ENCODE measurements at regions of chr10 and their contacts with region 1.

Region 1: DNA sequence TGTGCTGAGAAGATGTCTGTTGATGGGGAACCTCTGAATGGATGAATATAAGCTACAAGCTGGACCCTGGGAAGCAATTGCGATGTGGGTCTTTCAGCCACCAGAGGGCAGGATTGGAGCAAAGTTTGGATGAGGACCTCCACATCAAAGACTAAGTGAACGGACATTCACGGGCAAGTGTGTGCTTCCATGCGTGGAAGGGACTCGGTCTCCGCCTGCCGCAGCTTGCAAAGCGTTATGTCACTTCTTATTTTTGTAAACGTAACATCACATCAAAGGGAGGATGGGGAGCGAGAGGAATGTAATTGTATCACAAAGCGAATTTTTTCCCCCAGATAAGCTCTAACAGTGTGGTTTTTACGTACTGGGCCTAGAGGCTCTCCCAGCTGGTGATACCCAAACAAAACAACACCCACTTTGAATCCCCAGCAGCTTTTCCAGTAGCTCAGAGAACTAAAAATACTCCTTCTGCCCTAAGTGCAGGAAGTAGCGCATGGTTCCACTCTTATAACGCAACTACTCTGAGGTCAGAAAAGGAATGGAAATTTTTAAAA is 65.0 kb downstream of the VWA2 start:
- DNase-seq: peak; percentile 67
- ATAC-seq: peak; percentile 92
- H3K4me3 ChIP-seq: peak overlapping the region; percentile 78
- H3K27ac ChIP-seq: no peak overlapping the region
- H3K4me1 ChIP-seq: peaks cover 8% of the 10 kb centered on the region
- H3K27me3 ChIP-seq: no peaks in the 10 kb centered on the region
- CTCF ChIP-seq: peak; percentile 77 to 91 (median 87); a peak in 5 of 6 replicates
- EP300 ChIP-seq: no peak
- POLR2A ChIP-seq: no peak
- RAD21 ChIP-seq: peak; percentile 90

Region 2: DNA sequence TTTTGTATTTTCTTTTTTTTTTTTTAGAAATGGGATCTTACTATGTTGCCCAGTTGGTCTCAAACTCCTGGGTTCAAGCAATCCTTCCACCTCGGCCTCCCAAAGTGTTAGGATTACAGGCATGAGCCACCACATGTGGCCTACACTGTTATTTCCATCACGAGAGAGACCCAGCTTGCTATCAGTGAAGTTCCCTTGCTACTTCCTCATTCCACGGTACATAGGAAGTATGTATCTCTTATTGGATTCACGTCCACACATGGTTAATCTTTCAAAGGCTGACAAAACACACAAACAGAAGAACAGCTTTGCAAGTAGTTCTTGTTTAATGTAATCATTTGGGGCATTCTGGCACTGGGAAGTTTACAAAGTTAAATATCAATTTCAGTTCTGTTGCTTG is 501.1 kb before region 1 on chr10:
- CTCF ChIA-PET with region 1: interaction called, 3 read pairs
- POLR2A ChIA-PET with region 1: no interaction called
- RAD21 ChIA-PET with region 1: interaction called, 3 read pairs
- SMC1A ChIA-PET with region 1: no interaction called
- in situ Hi-C with region 1: no loop called
- intact Hi-C with region 1: loop called (anchors 5 kb)
- DNase-seq: no peak
- ATAC-seq: peak; percentile 55; the same call in 2 of the 3 replicates
- H3K4me3 ChIP-seq: no peak overlapping the region
- H3K27ac ChIP-seq: no peak overlapping the region
- H3K4me1 ChIP-seq: peaks cover under 1% of the 10 kb centered on the region
- H3K27me3 ChIP-seq: no peaks in the 10 kb centered on the region; a peak in 1 of 4 replicates
- CTCF ChIP-seq: no peak
- EP300 ChIP-seq: no peak
- POLR2A ChIP-seq: no peak
- RAD21 ChIP-seq: no peak

Region 3: GRCh38 chr10:114327537-114328440 is 23.7 kb after region 1 on chr10:
- CTCF ChIA-PET with region 1: interaction called, 16 read pairs
- POLR2A ChIA-PET with region 1: no interaction called
- RAD21 ChIA-PET with region 1: interaction called, 5 read pairs
- SMC1A ChIA-PET with region 1: interaction called, 4 read pairs
- in situ Hi-C with region 1: no loop called
- intact Hi-C with region 1: no loop called
- DNase-seq: no peak
- ATAC-seq: no peak
- H3K4me3 ChIP-seq: no peak overlapping the region
- H3K27ac ChIP-seq: no peak overlapping the region
- H3K4me1 ChIP-seq: no peaks in the 10 kb centered on the region
- H3K27me3 ChIP-seq: peaks cover 0 to 2% of the 10 kb centered on the region in 2 experiments; a peak in 2 of 4 replicates
- CTCF ChIP-seq: no peak
- EP300 ChIP-seq: no peak
- POLR2A ChIP-seq: no peak
- RAD21 ChIP-seq: no peak

Region 4: DNA sequence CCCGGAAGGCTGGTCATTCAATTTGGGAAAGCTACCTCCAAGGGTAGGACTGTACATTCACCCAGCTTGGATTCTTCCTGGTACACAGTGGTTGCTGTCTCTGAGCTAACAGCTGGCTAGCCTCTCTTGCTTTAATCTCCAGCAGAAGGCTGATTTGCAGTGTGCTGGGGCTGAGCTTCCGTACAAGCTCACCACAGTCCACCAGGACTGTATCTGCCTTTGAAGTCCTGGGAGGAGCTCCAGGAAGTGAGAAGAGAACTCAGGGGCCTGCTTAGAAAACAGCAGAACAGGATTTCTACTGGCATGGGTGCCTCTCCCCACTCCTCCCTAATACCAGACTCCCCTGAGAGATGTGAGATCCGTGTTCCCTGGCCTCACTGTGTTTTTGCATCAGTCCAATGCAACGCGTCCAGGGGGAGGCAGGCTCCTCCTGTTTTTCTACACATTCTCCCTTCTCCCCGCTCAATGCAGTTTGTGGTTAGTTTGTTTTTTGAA is 93.6 kb after region 1 on chr10:
- CTCF ChIA-PET with region 1: interaction called, 25 read pairs
- POLR2A ChIA-PET with region 1: interaction called, 3 read pairs
- RAD21 ChIA-PET with region 1: interaction called, 21 read pairs
- SMC1A ChIA-PET with region 1: interaction called, 14 read pairs
- in situ Hi-C with region 1: no loop called
- intact Hi-C with region 1: no loop called
- DNase-seq: no peak
- ATAC-seq: peak; percentile 70
- H3K4me3 ChIP-seq: no peak overlapping the region
- H3K27ac ChIP-seq: peak overlapping the region; percentile 41
- H3K4me1 ChIP-seq: peaks cover 18% of the 10 kb centered on the region
- H3K27me3 ChIP-seq: peaks cover 0 to under 1% of the 10 kb centered on the region in 2 experiments; a peak in 1 of 4 replicates
- CTCF ChIP-seq: peak in 1 of 3 experiments; percentile 2; a peak in 1 of 6 replicates
- EP300 ChIP-seq: no peak
- POLR2A ChIP-seq: no peak
- RAD21 ChIP-seq: no peak

Region 5: DNA sequence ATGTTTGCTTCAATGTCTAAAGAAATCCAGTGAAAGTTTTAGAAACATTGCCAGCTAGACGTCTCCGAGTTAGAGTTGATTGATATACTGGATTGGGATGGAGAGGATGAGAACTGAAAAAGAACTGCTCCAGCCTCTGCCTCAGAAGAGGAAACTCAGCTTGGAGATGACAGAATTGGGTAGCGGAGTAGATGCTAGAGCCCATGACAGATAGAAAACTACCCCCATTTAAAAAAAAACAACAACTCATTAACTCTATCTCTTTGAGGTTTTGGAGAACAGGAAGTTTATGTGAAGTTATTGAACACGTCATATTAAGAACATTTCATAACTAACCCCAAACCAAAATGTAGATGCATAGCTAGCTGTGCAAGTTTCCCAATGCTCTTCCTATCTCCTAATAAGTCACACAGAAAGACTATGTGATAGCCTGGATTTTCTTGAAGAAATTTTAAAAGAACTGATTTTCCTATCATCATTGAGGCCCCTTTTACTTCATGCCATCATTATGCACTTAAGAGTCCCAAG is 128.5 kb after region 1 on chr10:
- CTCF ChIA-PET with region 1: interaction called, 58 read pairs
- POLR2A ChIA-PET with region 1: no interaction called
- RAD21 ChIA-PET with region 1: interaction called, 18 read pairs
- SMC1A ChIA-PET with region 1: interaction called, 10 read pairs
- in situ Hi-C with region 1: no loop called
- intact Hi-C with region 1: loop called (anchors 1 kb)
- DNase-seq: no peak
- ATAC-seq: no peak
- H3K4me3 ChIP-seq: no peak overlapping the region
- H3K27ac ChIP-seq: no peak overlapping the region
- H3K4me1 ChIP-seq: no peaks in the 10 kb centered on the region
- H3K27me3 ChIP-seq: no peaks in the 10 kb centered on the region; a peak in 2 of 4 replicates
- CTCF ChIP-seq: no peak
- EP300 ChIP-seq: no peak
- POLR2A ChIP-seq: no peak
- RAD21 ChIP-seq: no peak

Region 6: GRCh38 chr10:114458955-114459354 is 154.9 kb after region 1 on chr10:
- CTCF ChIA-PET with region 1: interaction called, 45 read pairs
- POLR2A ChIA-PET with region 1: interaction called, 3 read pairs
- RAD21 ChIA-PET with region 1: interaction called, 40 read pairs
- SMC1A ChIA-PET with region 1: interaction called, 30 read pairs
- in situ Hi-C with region 1: no loop called
- intact Hi-C with region 1: loop called (anchors 1 kb)
- DNase-seq: no peak
- ATAC-seq: peak; percentile 95
- H3K4me3 ChIP-seq: no peak overlapping the region
- H3K27ac ChIP-seq: no peak overlapping the region
- H3K4me1 ChIP-seq: no peaks in the 10 kb centered on the region
- H3K27me3 ChIP-seq: no peaks in the 10 kb centered on the region
- CTCF ChIP-seq: peak; percentile 34 to 44 (median 41); a peak in 5 of 6 replicates
- EP300 ChIP-seq: no peak
- POLR2A ChIP-seq: no peak
- RAD21 ChIP-seq: peak; percentile 45

Region 7: GRCh38 chr10:114703377-114704107 is 399.4 kb after region 1 on chr10:
- CTCF ChIA-PET with region 1: interaction called, 4 read pairs
- POLR2A ChIA-PET with region 1: no interaction called
- RAD21 ChIA-PET with region 1: no interaction called
- SMC1A ChIA-PET with region 1: interaction called, 3 read pairs
- in situ Hi-C with region 1: no loop called
- intact Hi-C with region 1: loop called (anchors 5 kb)
- DNase-seq: no peak
- ATAC-seq: peak; percentile 61
- H3K4me3 ChIP-seq: no peak overlapping the region
- H3K27ac ChIP-seq: no peak overlapping the region
- H3K4me1 ChIP-seq: no peaks in the 10 kb centered on the region
- H3K27me3 ChIP-seq: no peaks in the 10 kb centered on the region; a peak in 1 of 4 replicates
- CTCF ChIP-seq: peak; percentile 46 to 58 (median 57)
- EP300 ChIP-seq: no peak
- POLR2A ChIP-seq: no peak
- RAD21 ChIP-seq: peak; percentile 68

Region 8: GRCh38 chr10:114758331-114758730 is 454.2 kb after region 1 on chr10:
- CTCF ChIA-PET with region 1: no interaction called
- POLR2A ChIA-PET with region 1: no interaction called
- RAD21 ChIA-PET with region 1: no interaction called
- SMC1A ChIA-PET with region 1: no interaction called
- in situ Hi-C with region 1: no loop called
- intact Hi-C with region 1: no loop called
- DNase-seq: no peak
- ATAC-seq: no peak
- H3K4me3 ChIP-seq: no peak overlapping the region
- H3K27ac ChIP-seq: no peak overlapping the region
- H3K4me1 ChIP-seq: no peaks in the 10 kb centered on the region
- H3K27me3 ChIP-seq: no peaks in the 10 kb centered on the region; a peak in 1 of 4 replicates
- CTCF ChIP-seq: no peak
- EP300 ChIP-seq: no peak
- POLR2A ChIP-seq: no peak
- RAD21 ChIP-seq: no peak